Tibial artery (tissue), 4 donors: ENCODE measurements at regions of chr9 and their contacts with region 1.

Region 1: GRCh38 chr9:31759703-31760102 is 624.7 kb upstream of the ACO1 start:
- DNase-seq: no peak
- H3K4me3 ChIP-seq: no peak overlapping the region
- H3K27ac ChIP-seq: no peak overlapping the region
- H3K4me1 ChIP-seq: no peaks in the 10 kb centered on the region
- H3K27me3 ChIP-seq: no peaks in the 10 kb centered on the region
- CTCF ChIP-seq: no peak

Region 2: GRCh38 chr9:31799953-31800609 is 40.4 kb after region 1 on chr9:
- intact Hi-C with region 1: loop called (anchors 10 kb)
- DNase-seq: no peak
- H3K4me3 ChIP-seq: no peak overlapping the region
- H3K27ac ChIP-seq: no peak overlapping the region
- H3K4me1 ChIP-seq: no peaks in the 10 kb centered on the region
- H3K27me3 ChIP-seq: no peaks in the 10 kb centered on the region
- CTCF ChIP-seq: peak in 1 of 2 experiments; percentile 6